CD4-positive, alpha-beta memory T cell (primary cell): ENCODE measurements at regions of chr9 and their contacts with region 1.

Region 1: GRCh38 chr9:21995177-21996086 is 841 bp downstream of the CDKN2B-AS1 start:
- DNase-seq: peak; percentile 84 to 89 (median 85)
- H3K4me3 ChIP-seq: peak overlapping the region; percentile 92 to 94
- H3K4me3 Mint-ChIP-seq: peak overlapping the region; percentile 93 to 100 (median 98)
- H3K27ac ChIP-seq: peak overlapping the region; percentile 75
- H3K27ac Mint-ChIP-seq: peak overlapping the region; percentile 93 to 98 (median 94)
- H3K4me1 ChIP-seq: peaks cover 21% of the 10 kb centered on the region
- H3K4me1 Mint-ChIP-seq: peaks cover 6 to 33% (median 13%) of the 10 kb centered on the region in 4 donors
- H3K27me3 ChIP-seq: no peaks in the 10 kb centered on the region
- H3K27me3 Mint-ChIP-seq: peaks cover 1 to 3% of the 10 kb centered on the region in 2 donors

Region 2: GRCh38 chr9:21334701-21335632 is 660.5 kb before region 1 on chr9 and contains the start of gene KLHL9:
- CTCF ChIA-PET with region 1: no interaction called
- POLR2A ChIA-PET with region 1: no interaction called
- intact Hi-C with region 1: loop called (anchors 10 kb)
- DNase-seq: peak; percentile 86 to 88 (median 88)
- H3K4me3 ChIP-seq: peak within 1 kb of the TSS; percentile 80 to 96
- H3K4me3 Mint-ChIP-seq: peak within 1 kb of the TSS; percentile 89 to 97 (median 94)
- H3K27ac ChIP-seq: peak within 1 kb of the TSS; percentile 98
- H3K27ac Mint-ChIP-seq: peak within 1 kb of the TSS; percentile 95 to 98 (median 97)
- H3K4me1 ChIP-seq: peaks cover 59% of the 10 kb centered on the region
- H3K4me1 Mint-ChIP-seq: peaks cover 37 to 69% (median 49%) of the 10 kb centered on the region in 4 donors
- H3K27me3 ChIP-seq: no peaks in the 10 kb centered on the region
- H3K27me3 Mint-ChIP-seq: peaks cover 0 to 3% of the 10 kb centered on the region in 2 donors
- total RNA-seq, gene KLHL9: 38.7 to 40.1 TPM

Region 3: GRCh38 chr9:21802195-21803000 is 193.0 kb before region 1 on chr9 and contains the start of gene MTAP:
- CTCF ChIA-PET with region 1: no interaction called
- POLR2A ChIA-PET with region 1: interaction called, 6 read pairs
- intact Hi-C with region 1: loop called (anchors 1 kb)
- DNase-seq: peak in 4 of 5 donors; percentile 66 to 79 (median 76)
- H3K4me3 ChIP-seq: peak within 1 kb of the TSS; percentile 69 to 86
- H3K4me3 Mint-ChIP-seq: peak within 1 kb of the TSS; percentile 95 to 100 (median 99)
- H3K27ac ChIP-seq: peak within 1 kb of the TSS; percentile 50
- H3K27ac Mint-ChIP-seq: peak within 1 kb of the TSS; percentile 94 to 99 (median 98)
- H3K4me1 ChIP-seq: peaks cover 37% of the 10 kb centered on the region
- H3K4me1 Mint-ChIP-seq: peaks cover 28 to 52% (median 39%) of the 10 kb centered on the region in 4 donors
- H3K27me3 ChIP-seq: no peaks in the 10 kb centered on the region
- H3K27me3 Mint-ChIP-seq: peaks cover 4 to 5% of the 10 kb centered on the region in 2 donors
- total RNA-seq, gene MTAP: 45.5 to 47.9 TPM

Region 4: GRCh38 chr9:21919377-21920362 is 75.8 kb before region 1 on chr9:
- CTCF ChIA-PET with region 1: interaction called, 3 read pairs
- POLR2A ChIA-PET with region 1: no interaction called
- intact Hi-C with region 1: loop called (anchors 1 kb)
- DNase-seq: peak; percentile 51 to 79 (median 75)
- H3K4me3 ChIP-seq: peak overlapping the region in 1 of 2 donors; percentile 22
- H3K4me3 Mint-ChIP-seq: peak overlapping the region; percentile 4 to 76 (median 63)
- H3K27ac ChIP-seq: no peak overlapping the region
- H3K27ac Mint-ChIP-seq: peak overlapping the region; percentile 58 to 96 (median 85)
- H3K4me1 ChIP-seq: peaks cover 31% of the 10 kb centered on the region
- H3K4me1 Mint-ChIP-seq: peaks cover 21 to 43% (median 35%) of the 10 kb centered on the region in 4 donors
- H3K27me3 ChIP-seq: no peaks in the 10 kb centered on the region
- H3K27me3 Mint-ChIP-seq: no peaks in the 10 kb centered on the region

Region 5: GRCh38 chr9:21965401-21965951 is 30.0 kb before region 1 on chr9:
- CTCF ChIA-PET with region 1: interaction called, 4 read pairs
- POLR2A ChIA-PET with region 1: interaction called, 4 read pairs
- intact Hi-C with region 1: loop called (anchors 2 kb)
- DNase-seq: peak; percentile 30 to 50 (median 34)
- H3K4me3 ChIP-seq: peak overlapping the region in 1 of 2 donors; percentile 44
- H3K4me3 Mint-ChIP-seq: peak overlapping the region; percentile 57 to 74 (median 64)
- H3K27ac ChIP-seq: no peak overlapping the region
- H3K27ac Mint-ChIP-seq: peak overlapping the region in 5 of 7 donors; percentile 57 to 81 (median 72)
- H3K4me1 ChIP-seq: peaks cover 22% of the 10 kb centered on the region
- H3K4me1 Mint-ChIP-seq: peaks cover 15 to 47% (median 27%) of the 10 kb centered on the region in 4 donors
- H3K27me3 ChIP-seq: peaks cover 69% of the 10 kb centered on the region
- H3K27me3 Mint-ChIP-seq: peaks cover 76 to 88% of the 10 kb centered on the region in 2 donors

Region 6: GRCh38 chr9:21974548-21975409 is 20.7 kb before region 1 on chr9:
- CTCF ChIA-PET with region 1: interaction called, 4 read pairs
- POLR2A ChIA-PET with region 1: interaction called, 4 read pairs
- intact Hi-C with region 1: loop called (anchors 2 kb)
- DNase-seq: peak in 3 of 5 donors; percentile 32 to 63 (median 41)
- H3K4me3 ChIP-seq: peak overlapping the region in 1 of 2 donors; percentile 48
- H3K4me3 Mint-ChIP-seq: peak overlapping the region; percentile 76 to 89 (median 81)
- H3K27ac ChIP-seq: no peak overlapping the region
- H3K27ac Mint-ChIP-seq: peak overlapping the region in 5 of 7 donors; percentile 57 to 81 (median 68)
- H3K4me1 ChIP-seq: peaks cover 24% of the 10 kb centered on the region
- H3K4me1 Mint-ChIP-seq: peaks cover 14 to 25% (median 19%) of the 10 kb centered on the region in 4 donors
- H3K27me3 ChIP-seq: peaks cover 83% of the 10 kb centered on the region
- H3K27me3 Mint-ChIP-seq: peaks cover 75 to 78% of the 10 kb centered on the region in 2 donors

Region 7: GRCh38 chr9:22026696-22027095 is 31.3 kb after region 1 on chr9:
- CTCF ChIA-PET with region 1: no interaction called
- POLR2A ChIA-PET with region 1: no interaction called
- intact Hi-C with region 1: no loop called
- DNase-seq: no peak
- H3K4me3 ChIP-seq: no peak overlapping the region
- H3K4me3 Mint-ChIP-seq: no peak overlapping the region
- H3K27ac ChIP-seq: no peak overlapping the region
- H3K27ac Mint-ChIP-seq: no peak overlapping the region
- H3K4me1 ChIP-seq: no peaks in the 10 kb centered on the region
- H3K4me1 Mint-ChIP-seq: peaks cover 0 to under 1% (median 0%) of the 10 kb centered on the region in 4 donors
- H3K27me3 ChIP-seq: no peaks in the 10 kb centered on the region
- H3K27me3 Mint-ChIP-seq: peaks cover 3 to 6% of the 10 kb centered on the region in 2 donors